ENCODE measurements at regions of chr6 and their contacts with region 1.

Region 1: DNA sequence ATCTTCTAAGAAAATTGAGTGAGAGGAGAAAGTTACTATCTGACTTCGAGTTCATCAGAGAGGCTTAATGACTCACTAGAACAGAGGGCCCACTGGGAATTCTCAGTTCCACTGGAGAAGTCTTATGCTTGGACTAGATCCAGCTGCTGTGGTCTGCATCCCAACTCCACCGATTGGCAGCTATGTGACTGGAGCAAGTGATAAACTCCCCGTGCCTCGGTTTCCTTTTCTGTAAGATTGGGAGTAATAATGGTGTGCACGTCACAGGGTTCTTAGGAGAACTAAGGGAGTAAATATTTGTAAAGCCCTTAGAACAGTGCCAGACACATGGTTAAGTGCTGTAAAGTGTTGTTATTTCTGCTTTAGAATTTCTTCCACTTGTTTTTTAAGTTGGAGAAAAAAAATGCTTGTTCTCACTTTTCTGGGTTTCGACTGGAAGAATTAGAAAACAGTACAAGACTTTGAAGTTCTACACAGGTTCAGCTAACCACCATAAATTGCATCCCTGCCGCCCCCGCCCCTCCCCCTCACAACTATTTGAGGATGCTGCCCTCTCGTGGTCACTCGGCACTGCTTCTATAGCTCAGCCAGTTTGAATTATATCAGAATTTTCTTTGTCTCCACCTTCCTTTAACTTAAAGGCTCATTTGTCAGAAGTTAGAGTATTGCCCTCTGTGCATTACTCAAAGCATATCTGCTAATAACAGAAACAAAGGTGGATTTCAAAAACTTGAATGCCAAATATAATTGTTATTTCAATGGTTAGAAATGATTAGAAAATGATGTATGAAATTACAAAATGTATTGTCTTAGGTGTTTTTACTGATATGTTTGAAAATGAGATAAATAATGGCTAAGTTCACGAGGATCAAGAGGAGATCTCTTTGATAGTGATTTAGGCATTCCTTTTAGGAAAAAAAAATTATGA is 95.0 kb upstream of the IFNGR1 start:
- H3K4me3 Mint-ChIP-seq: no peak overlapping the region
- H3K27ac Mint-ChIP-seq: peak overlapping the region; percentile 30
- H3K4me1 Mint-ChIP-seq: peaks cover 33% of the 10 kb centered on the region
- H3K27me3 Mint-ChIP-seq: no peaks in the 10 kb centered on the region

Region 2: GRCh38 chr6:137094411-137095008 is 219.7 kb before region 1 on chr6:
- intact Hi-C with region 1: loop called (anchors 1 kb)
- H3K4me3 Mint-ChIP-seq: no peak overlapping the region
- H3K27ac Mint-ChIP-seq: no peak overlapping the region
- H3K4me1 Mint-ChIP-seq: peaks cover 14% of the 10 kb centered on the region
- H3K27me3 Mint-ChIP-seq: no peaks in the 10 kb centered on the region

Region 3: DNA sequence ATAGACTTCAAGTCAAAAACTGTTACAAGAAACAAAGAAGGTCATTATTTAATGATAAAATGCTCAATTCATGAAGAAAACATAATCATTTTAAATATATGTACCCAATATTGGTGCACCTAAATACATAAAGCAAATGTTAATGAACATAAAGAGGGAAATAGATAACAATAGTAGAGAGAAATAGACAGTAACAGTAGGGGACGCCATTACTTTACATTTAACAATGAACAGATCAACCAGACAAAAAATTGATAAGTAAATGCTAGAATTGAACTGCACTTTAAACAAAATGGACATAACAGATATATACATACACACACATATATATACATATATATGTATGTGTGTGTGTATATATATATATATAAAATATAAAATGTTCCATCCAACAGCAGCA is 178.1 kb before region 1 on chr6:
- intact Hi-C with region 1: loop called (anchors 2 kb)
- H3K4me3 Mint-ChIP-seq: no peak overlapping the region
- H3K27ac Mint-ChIP-seq: no peak overlapping the region
- H3K4me1 Mint-ChIP-seq: peaks cover 16% of the 10 kb centered on the region
- H3K27me3 Mint-ChIP-seq: peaks cover 7% of the 10 kb centered on the region

Region 4: DNA sequence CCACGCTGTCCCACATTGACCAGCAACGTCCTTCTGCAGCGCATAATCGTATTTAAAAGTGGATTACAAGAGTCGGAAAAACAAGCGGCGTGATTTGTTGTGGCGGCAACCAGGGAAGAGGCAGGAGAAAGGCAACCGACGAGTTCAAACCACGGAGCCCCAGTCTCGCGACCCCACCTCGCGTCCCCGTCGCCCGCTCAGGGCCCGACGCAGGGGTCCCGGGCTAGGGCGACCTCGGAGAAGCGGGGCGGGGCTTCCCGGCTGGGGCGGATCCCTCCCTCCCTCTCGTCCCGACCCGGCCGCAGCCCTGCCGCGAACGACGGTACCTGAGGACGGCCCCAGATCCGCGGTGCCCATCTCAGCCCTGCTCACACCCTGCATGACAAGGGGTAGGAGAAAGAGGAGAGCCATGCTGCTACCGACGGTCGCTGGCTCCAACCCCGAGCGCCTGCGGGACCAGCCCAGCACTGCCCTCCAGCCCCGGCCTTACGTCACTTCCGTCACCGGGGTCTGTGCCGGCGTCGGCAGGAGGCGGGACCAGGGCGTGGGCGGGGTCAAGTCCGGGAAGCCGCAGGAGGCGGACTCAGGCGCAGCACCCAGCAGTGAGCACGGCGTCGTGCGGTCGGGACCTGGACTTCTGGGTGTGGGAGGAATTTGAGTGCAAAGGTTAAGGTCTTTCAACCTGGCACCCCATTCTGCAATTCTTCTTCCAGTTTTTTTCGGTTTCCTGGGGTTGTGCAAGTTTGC is 95.1 kb before region 1 on chr6 and contains the start of gene IFNGR1:
- intact Hi-C with region 1: loop called (anchors 1 kb)
- H3K4me3 Mint-ChIP-seq: peak within 1 kb of the TSS; percentile 93
- H3K27ac Mint-ChIP-seq: peak within 1 kb of the TSS; percentile 100
- H3K4me1 Mint-ChIP-seq: peaks cover 66% of the 10 kb centered on the region
- H3K27me3 Mint-ChIP-seq: no peaks in the 10 kb centered on the region

Region 5: GRCh38 chr6:137224799-137225198 is 89.4 kb before region 1 on chr6:
- intact Hi-C with region 1: loop called (anchors 2 kb)
- H3K4me3 Mint-ChIP-seq: no peak overlapping the region
- H3K27ac Mint-ChIP-seq: peak overlapping the region; percentile 100
- H3K4me1 Mint-ChIP-seq: peaks cover 85% of the 10 kb centered on the region
- H3K27me3 Mint-ChIP-seq: no peaks in the 10 kb centered on the region

Region 6: DNA sequence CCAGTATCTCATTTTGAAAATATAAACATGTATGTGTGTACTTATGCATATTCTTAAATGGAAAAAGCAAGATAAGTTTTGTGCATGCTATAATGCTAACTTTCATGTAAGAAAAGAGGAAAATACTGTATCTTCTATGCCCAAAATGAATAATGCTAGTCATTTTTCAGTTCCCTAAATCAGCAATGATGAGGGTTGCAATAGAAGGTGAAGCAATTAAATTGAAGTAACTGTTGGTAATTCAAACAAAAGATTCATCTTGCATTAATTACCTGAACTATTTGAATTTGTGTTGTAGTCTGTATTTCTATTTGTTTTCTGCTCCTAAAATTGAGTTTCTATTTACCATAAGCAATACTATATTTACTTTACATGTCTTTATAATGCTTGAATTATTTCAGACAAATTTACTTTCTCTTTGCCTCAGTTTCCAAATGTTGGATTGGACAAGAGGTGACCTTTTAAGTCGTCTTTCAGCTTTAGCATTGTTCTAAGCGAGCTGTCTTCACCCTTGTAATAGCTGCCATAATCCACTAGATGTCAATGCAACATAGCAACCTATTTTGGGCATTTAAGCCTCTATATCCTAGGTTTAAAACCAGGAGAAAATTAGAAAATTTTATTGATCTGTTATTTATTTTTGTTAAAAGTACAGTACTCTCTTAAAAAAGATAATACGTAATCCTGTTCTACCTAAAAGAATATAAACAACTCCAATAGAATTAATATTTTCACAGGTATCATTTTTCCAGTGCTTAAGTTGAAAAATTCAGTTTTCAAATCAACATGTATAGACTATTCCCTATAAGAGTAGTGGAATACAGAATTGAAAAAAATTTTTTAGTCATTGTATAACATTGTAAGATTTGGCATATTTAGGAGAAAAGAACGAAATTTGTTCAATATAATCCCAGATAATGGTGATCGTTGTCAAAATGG is 42.7 kb before region 1 on chr6:
- intact Hi-C with region 1: loop called (anchors 1 kb)
- H3K4me3 Mint-ChIP-seq: no peak overlapping the region
- H3K27ac Mint-ChIP-seq: no peak overlapping the region
- H3K4me1 Mint-ChIP-seq: peaks cover 11% of the 10 kb centered on the region
- H3K27me3 Mint-ChIP-seq: no peaks in the 10 kb centered on the region

Region 7: DNA sequence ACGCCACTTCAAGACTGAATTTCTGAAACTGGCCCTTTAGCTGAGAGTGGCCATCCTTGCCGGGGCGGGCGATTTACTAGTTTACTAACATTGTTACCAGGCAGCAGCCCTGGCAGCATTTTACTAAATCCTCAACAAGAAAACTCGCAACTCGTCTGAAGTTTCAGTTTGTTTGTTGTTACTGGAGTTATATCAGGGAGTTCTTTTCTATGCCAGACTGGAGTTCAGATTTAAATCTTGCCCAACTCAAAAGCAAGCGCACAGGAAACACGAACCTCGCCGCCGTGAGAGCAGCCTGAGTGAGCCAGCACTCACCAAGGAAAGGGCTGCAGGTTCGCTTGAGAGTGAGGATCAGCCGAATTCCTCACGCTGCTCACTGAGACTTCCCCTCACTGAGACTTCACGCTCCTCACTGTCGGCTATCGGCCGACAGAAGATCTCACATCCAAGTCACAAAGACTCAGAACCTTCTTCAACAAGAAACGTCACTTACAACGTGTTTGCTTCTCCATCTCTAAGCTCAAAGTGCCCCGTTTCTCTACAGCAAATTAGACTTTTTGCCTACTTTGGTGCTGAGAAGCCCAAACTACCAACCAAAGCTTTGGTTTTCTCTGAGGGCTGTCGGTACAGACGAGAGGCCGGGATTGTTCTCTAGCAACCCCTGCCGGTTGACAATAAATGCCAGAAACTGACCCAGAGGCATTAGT is 101.1 kb after region 1 on chr6:
- intact Hi-C with region 1: loop called (anchors 1 kb)
- H3K4me3 Mint-ChIP-seq: peak overlapping the region; percentile 78
- H3K27ac Mint-ChIP-seq: peak overlapping the region; percentile 79
- H3K4me1 Mint-ChIP-seq: peaks cover 14% of the 10 kb centered on the region
- H3K27me3 Mint-ChIP-seq: peaks cover 19% of the 10 kb centered on the region

Measured in dendritic cell treated with granulocyte-macrophage colony-stimulating factor and Interleukin-4, amounts not matched to agents 40 ng/mL and 50 ng/mL, for 4 days (primary cell).